BJ (cell line): ENCODE measurements at regions of chr15 and their contacts with region 1.

Region 1: DNA sequence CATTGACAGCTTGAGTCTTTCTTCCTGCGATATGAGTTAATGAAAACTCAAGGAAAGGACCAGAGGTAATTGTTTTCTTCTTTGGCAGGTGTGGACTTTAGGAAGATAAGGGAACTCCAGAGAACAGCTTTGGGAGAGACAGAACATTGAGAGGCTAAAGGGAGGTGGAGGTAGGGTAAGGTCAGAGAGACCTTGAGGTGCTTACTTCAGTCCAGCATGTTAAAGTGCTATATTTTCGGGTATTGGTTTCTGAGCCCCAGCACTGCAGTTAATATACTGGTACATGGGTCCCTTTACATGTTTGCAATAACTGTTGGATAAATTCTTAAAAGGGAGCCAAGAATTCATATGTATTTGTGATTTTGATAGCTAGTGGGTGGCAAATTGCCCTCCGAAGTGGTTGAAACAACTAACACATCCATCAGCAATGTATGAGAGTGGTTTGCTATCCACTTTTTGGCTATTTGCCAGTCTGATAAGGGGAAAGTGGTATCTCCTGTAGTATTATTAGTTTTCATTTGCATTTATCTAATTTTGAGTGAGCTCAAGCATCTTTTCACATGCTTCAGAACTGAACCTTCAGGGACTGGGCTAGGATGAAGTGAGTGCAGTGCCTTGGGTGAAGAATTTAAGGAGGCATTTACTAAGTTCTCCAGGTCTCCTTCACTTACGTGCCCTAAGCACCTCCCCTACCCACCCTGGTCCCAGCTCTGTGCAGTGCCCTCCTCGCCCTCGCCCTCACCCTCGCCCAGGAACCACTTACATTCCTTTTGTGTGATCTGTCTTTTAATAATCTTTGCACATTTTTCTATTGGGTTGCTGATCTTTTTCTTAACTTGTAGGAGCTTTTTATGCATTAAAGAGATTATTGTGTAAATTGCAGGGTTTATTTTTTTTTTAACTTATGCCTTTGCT is 322.4 kb downstream of the THSD4 start:
- DNase-seq: no peak
- H3K4me3 ChIP-seq: no peak overlapping the region
- H3K27me3 ChIP-seq: no peaks in the 10 kb centered on the region
- CTCF ChIP-seq: no peak

Region 2: DNA sequence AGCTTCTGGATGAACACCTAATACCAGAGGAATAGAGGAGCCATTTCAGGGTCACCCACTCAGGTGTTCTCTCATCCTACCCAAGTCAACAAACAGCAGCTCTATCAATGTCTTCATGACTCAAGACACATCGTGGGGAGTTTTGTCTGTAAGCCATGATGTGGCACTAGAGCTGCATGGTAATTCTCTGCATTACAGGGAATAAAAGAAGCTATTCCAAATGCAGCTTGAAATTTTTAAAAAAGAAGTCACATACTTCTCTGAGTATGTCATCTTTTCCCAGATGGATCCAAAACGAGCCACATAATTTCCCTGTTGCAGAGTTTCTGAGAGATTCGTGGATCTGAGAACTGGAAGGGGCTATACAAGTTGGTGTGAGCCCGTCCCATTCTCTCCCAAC is 328.5 kb before region 1 on chr15:
- CTCF ChIA-PET with region 1: interaction called, 49 read pairs
- POLR2A ChIA-PET with region 1: interaction called, 3 read pairs
- DNase-seq: peak; percentile 51
- H3K4me3 ChIP-seq: no peak overlapping the region
- H3K27me3 ChIP-seq: no peaks in the 10 kb centered on the region
- CTCF ChIP-seq: peak; percentile 49

Region 3: GRCh38 chr15:71364117-71364584 is 73.5 kb before region 1 on chr15:
- CTCF ChIA-PET with region 1: no interaction called
- POLR2A ChIA-PET with region 1: interaction called, 20 read pairs
- DNase-seq: no peak
- H3K4me3 ChIP-seq: no peak overlapping the region
- H3K27me3 ChIP-seq: no peaks in the 10 kb centered on the region
- CTCF ChIP-seq: no peak